Activated naive CD8-positive, alpha-beta T cell treated with anti-CD3 and anti-CD28 coated beads, Interleukin-2, amount 10 ng/mL, durations not matched to agents 7 days and 5 days (primary cell): ENCODE measurements at regions of chr17 and their contacts with region 1.

Region 1: GRCh38 chr17:75012346-75013091 is at the start of gene MRPL58:
- DNase-seq: peak; percentile 88
- ATAC-seq: peak; percentile 90
- H3K4me3 Mint-ChIP-seq: peak within 1 kb of the TSS; percentile 95
- H3K27ac Mint-ChIP-seq: peak within 1 kb of the TSS; percentile 70
- H3K4me1 Mint-ChIP-seq: peaks cover 19% of the 10 kb centered on the region
- H3K27me3 Mint-ChIP-seq: peaks cover 2% of the 10 kb centered on the region
- total RNA-seq, gene MRPL58: 32.2 to 36.2 TPM

Region 2: DNA sequence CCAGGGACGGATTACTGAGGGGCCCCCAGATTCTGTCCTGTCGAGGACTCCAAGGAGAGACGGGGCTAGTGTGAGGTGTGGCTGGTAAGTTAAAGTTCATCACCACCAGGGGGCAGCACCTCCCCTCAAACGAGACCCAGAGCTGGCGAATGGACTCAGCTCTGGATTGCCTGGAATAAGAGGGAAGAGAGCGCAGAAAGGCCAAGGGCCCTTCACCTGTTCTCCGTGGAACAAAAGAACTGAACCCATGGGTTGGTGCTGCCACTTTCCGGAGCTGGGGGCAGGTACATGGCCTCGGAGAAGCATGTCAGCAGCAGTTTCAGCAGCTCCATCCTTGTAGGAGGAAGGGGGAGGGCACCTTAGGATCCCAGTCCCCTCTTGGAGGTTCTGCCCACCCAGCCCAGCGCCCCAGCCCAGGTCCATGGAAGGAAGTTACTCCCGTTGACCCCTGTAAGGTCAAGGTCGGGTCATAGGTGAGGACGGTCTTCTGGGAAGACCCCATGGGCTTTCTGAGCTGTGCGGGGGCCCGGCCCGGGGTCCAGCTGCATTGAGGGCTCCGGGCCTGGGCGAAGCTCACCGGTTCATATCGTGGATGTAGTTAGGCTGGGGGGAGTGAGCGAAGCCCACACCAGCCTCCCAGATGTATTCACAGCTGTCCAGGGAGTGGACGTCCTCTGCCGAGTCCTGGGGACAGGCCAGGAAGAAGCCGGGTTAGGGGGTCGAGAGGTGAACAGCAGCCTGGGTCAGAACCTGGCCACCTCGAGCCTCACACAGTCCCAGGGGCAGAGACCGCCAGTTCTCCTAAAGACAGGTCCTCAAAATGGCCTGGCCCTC is 50.6 kb before region 1 on chr17:
- POLR2A ChIA-PET with region 1: interaction called, 18 read pairs
- DNase-seq: peak; percentile 83
- ATAC-seq: peak; percentile 73
- H3K4me3 Mint-ChIP-seq: peak overlapping the region; percentile 17
- H3K27ac Mint-ChIP-seq: no peak overlapping the region
- H3K4me1 Mint-ChIP-seq: peaks cover 7% of the 10 kb centered on the region
- H3K27me3 Mint-ChIP-seq: peaks cover 4% of the 10 kb centered on the region

Region 3: GRCh38 chr17:74987418-74987908 is 25.1 kb before region 1 on chr17 and contains the start of gene CDR2L:
- POLR2A ChIA-PET with region 1: interaction called, 19 read pairs
- DNase-seq: peak; percentile 93
- ATAC-seq: peak; percentile 96
- H3K4me3 Mint-ChIP-seq: peak within 1 kb of the TSS; percentile 87
- H3K27ac Mint-ChIP-seq: no peak within 1 kb of the TSS
- H3K4me1 Mint-ChIP-seq: peaks cover 13% of the 10 kb centered on the region
- H3K27me3 Mint-ChIP-seq: peaks cover 64% of the 10 kb centered on the region
- total RNA-seq, gene CDR2L: 0.11 to 0.14 TPM

Region 4: DNA sequence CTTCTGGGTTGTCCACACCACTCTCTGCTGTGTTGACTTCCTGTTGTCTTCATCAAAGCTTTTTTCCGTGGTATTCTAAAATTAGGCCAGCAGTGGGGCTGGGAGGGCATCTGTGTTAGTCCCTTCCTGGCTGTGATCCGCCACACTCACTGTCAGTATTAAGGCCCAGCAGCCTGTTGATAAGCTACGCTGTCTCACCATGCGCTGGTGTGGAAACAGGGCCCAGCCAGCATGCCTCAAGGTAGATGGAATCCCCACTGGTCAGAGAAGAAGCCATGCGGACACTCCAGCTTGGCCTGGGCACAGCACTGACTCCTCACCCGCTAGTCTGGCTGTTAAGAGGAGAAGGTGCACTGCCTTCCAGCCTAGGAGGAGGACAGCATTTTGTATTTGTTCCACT is 13.7 kb before region 1 on chr17:
- POLR2A ChIA-PET with region 1: interaction called, 15 read pairs
- DNase-seq: no peak
- ATAC-seq: peak; percentile 36
- H3K4me3 Mint-ChIP-seq: no peak overlapping the region
- H3K27ac Mint-ChIP-seq: no peak overlapping the region
- H3K4me1 Mint-ChIP-seq: peaks cover 10% of the 10 kb centered on the region
- H3K27me3 Mint-ChIP-seq: peaks cover 4% of the 10 kb centered on the region

Region 5: GRCh38 chr17:75024686-75025397 is 12.3 kb after region 1 on chr17:
- POLR2A ChIA-PET with region 1: interaction called, 17 read pairs
- DNase-seq: peak; percentile 56
- ATAC-seq: peak; percentile 78
- H3K4me3 Mint-ChIP-seq: peak overlapping the region; percentile 40
- H3K27ac Mint-ChIP-seq: peak overlapping the region; percentile 68
- H3K4me1 Mint-ChIP-seq: peaks cover 17% of the 10 kb centered on the region
- H3K27me3 Mint-ChIP-seq: peaks cover 6% of the 10 kb centered on the region

Region 6: DNA sequence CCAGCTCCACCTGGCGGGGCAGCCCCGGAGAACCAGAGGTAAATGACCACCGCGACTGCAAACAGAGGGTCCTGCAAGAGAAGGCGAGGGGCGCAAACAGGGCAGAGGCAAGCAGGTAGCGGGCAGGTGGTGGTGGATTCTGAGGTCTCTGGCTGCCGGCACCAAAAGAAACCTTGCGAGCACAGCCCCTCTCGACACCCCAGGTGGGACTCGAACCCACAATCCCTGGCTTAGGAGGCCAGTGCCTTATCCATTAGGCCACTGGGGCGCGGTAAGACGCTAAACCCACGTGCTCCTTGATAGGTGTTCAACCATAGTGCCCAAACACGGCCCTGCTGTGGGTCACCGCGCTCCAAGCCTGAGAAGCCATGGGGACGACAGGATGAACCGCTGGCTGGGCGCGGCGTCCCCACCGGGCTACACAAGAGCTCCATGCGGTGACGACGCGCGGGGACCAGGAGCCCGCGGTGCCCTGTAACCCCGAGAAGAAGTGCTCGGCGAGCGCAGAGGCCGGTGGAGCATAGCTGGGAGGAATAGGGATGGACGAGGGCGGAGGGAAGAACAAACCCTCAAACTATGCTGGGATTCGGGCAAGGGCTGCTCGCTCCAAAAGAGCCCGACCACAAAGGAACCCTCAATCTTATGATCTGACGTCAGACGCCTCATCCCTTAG is 21.9 kb after region 1 on chr17:
- POLR2A ChIA-PET with region 1: interaction called, 25 read pairs
- DNase-seq: peak; percentile 87
- ATAC-seq: peak; percentile 53
- H3K4me3 Mint-ChIP-seq: peak overlapping the region; percentile 88
- H3K27ac Mint-ChIP-seq: peak overlapping the region; percentile 95
- H3K4me1 Mint-ChIP-seq: peaks cover 40% of the 10 kb centered on the region
- H3K27me3 Mint-ChIP-seq: no peaks in the 10 kb centered on the region

Region 7: GRCh38 chr17:75046582-75047289 is 34.2 kb after region 1 on chr17 and contains the starts of genes ATP5PD and KCTD2:
- POLR2A ChIA-PET with region 1: interaction called, 13 read pairs
- DNase-seq: peak; percentile 93
- ATAC-seq: peak; percentile 92
- H3K4me3 Mint-ChIP-seq: peak within 1 kb of the TSS; percentile 98
- H3K27ac Mint-ChIP-seq: peak within 1 kb of the TSS; percentile 93
- H3K4me1 Mint-ChIP-seq: peaks cover 23% of the 10 kb centered on the region
- H3K27me3 Mint-ChIP-seq: no peaks in the 10 kb centered on the region
- total RNA-seq, gene ATP5PD: 196 to 199 TPM
- total RNA-seq, gene KCTD2: 20.4 to 22.4 TPM